Pancreas (tissue), 10 donors: ENCODE measurements at regions of chr11 and their contacts with region 1.

Region 1: GRCh38 chr11:75133976-75134375 is 16.9 kb upstream of the SLCO2B1 start:
- DNase-seq: no peak
- ATAC-seq: no peak
- H3K4me3 ChIP-seq: no peak overlapping the region
- H3K27ac ChIP-seq: no peak overlapping the region
- H3K4me1 ChIP-seq: no peaks in the 10 kb centered on the region
- H3K27me3 ChIP-seq: no peaks in the 10 kb centered on the region
- CTCF ChIP-seq: no peak

Region 2: DNA sequence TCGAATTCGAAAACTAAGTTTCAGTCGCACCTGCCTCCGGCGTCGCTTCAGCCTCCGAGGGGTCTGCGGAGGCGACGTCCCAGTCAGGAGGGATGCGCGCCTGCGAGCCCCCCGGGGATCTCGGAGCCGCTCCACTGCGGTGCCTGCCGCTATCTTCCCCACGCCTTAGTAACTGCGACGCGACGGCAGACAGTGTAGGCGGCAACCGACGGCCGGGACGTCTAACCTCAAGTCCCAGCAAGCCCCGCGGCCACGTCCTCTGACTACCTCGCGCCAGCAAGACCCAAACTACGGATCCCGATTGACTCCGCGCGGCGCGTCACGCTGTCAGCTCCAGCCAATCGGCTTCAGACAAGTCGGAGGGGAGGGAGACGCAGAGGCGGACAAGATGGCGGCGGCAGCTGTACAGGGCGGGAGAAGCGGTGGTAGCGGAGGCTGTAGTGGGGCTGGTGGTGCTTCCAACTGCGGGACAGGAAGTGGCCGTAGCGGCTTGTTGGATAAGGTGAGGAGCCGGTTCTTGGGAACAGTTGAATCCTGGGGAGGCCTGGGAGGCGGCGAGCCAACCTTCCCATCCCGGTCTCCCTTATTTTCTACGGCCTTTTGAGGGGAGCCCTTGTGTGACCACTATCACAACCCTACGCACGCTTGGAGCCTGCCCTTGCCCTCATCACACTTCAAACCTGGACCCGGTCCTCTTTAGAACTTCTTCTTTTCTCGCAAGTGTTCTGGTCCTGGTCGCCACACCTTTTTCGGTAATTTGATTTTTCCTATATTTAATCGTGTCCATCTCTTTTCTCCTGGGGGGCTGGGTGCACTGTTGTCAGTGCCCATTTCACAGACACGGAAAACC is 184.9 kb before region 1 on chr11 and contains the starts of genes SPCS2 and XRRA1:
- intact Hi-C with region 1: no loop called
- DNase-seq: peak; percentile 98 to 99 (median 98)
- ATAC-seq: peak; percentile 98 to 99 (median 99)
- H3K4me3 ChIP-seq: peak within 1 kb of the TSS; percentile 72 to 85 (median 81)
- H3K27ac ChIP-seq: peak within 1 kb of the TSS; percentile 57 to 78 (median 76)
- H3K4me1 ChIP-seq: peaks cover 5 to 24% (median 17%) of the 10 kb centered on the region in 3 donors
- H3K27me3 ChIP-seq: no peaks in the 10 kb centered on the region
- CTCF ChIP-seq: no peak
- total RNA-seq, gene SPCS2: 81.0 to 125 (median 103) TPM
- total RNA-seq, gene XRRA1: 7.5 to 22.5 (median 9.9) TPM

Region 3: DNA sequence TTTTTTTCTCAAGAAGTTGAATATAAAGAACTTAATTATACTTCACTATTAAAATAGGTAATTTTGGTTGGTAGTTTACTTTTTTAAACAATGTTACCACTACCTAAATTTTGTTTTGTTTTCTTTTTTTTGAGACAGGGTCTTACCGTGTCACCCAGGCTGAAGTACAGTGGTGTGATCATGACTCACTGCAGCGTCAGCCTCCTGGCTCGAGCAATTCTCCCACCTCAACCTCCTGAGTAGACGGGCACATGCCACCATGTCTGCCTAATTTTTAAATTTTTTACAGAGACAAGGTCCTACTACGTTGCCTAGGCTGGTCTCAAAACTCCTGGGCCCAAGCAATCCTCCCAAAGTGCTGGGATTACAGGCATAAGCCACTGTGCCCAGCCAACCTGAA is 167.3 kb before region 1 on chr11:
- intact Hi-C with region 1: no loop called
- DNase-seq: no peak
- ATAC-seq: no peak
- H3K4me3 ChIP-seq: no peak overlapping the region
- H3K27ac ChIP-seq: no peak overlapping the region
- H3K4me1 ChIP-seq: peaks cover 8 to 25% (median 22%) of the 10 kb centered on the region in 3 donors
- H3K27me3 ChIP-seq: no peaks in the 10 kb centered on the region
- CTCF ChIP-seq: no peak

Region 4: GRCh38 chr11:74992852-74993251 is 141.1 kb before region 1 on chr11:
- intact Hi-C with region 1: no loop called
- DNase-seq: no peak
- ATAC-seq: no peak
- H3K4me3 ChIP-seq: no peak overlapping the region
- H3K27ac ChIP-seq: no peak overlapping the region
- H3K4me1 ChIP-seq: peaks cover 0 to 8% (median 5%) of the 10 kb centered on the region in 3 donors
- H3K27me3 ChIP-seq: no peaks in the 10 kb centered on the region
- CTCF ChIP-seq: no peak

Region 5: GRCh38 chr11:75214411-75214821 is 80.4 kb after region 1 on chr11:
- intact Hi-C with region 1: loop called in 1 of 3 experiments (anchors 10 kb)
- DNase-seq: peak; percentile 66 to 90 (median 80)
- ATAC-seq: peak; percentile 72 to 96 (median 91)
- H3K4me3 ChIP-seq: no peak overlapping the region
- H3K27ac ChIP-seq: no peak overlapping the region
- H3K4me1 ChIP-seq: peaks cover 0 to 4% (median 0%) of the 10 kb centered on the region in 3 donors
- H3K27me3 ChIP-seq: no peaks in the 10 kb centered on the region
- CTCF ChIP-seq: no peak

Region 6: GRCh38 chr11:75350743-75351540 is 217.0 kb after region 1 on chr11:
- intact Hi-C with region 1: no loop called
- DNase-seq: peak; percentile 67 to 89 (median 76)
- ATAC-seq: peak; percentile 55 to 69 (median 58)
- H3K4me3 ChIP-seq: peak overlapping the region; percentile 40 to 92 (median 80)
- H3K27ac ChIP-seq: peak overlapping the region; percentile 83 to 87 (median 85)
- H3K4me1 ChIP-seq: peaks cover 15 to 33% (median 27%) of the 10 kb centered on the region in 3 donors
- H3K27me3 ChIP-seq: no peaks in the 10 kb centered on the region
- CTCF ChIP-seq: no peak